BJ (cell line): ENCODE measurements at regions of chr1 and their contacts with region 1.

Region 1: DNA sequence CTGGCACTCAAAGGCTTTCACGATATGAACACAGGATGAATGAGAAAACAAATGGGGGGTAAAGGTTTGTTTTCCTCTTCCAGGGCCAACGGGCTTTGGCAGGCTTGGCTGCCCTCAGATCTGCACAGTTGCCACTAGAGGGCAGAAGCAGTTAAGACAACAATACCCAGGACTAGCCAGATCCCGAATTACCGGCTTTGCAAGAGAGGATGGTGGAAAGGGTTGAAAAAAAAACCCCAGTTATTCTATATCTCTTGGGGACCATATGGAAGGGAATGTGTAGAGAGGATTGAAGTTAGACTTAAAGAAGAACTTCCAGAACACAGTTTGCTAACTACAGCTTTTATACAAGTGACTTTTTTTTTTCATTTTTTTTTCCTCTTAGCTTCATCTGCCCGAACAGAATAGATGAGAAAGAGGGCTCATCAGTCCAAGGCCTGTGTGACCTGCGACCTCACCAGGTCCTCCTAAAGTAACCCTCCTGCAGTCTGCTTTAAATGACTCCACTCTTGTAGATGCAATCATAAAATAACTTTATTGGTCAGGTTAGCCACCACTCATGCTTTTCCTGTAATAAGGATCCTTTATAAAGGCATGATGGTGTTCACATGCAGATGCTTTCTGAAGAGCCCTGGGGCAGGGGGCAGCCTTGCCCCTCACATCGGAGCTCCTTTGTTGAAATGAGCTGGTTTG is 10.7 kb downstream of the FMOD start:
- DNase-seq: no peak
- H3K4me3 ChIP-seq: no peak overlapping the region
- H3K27me3 ChIP-seq: peaks cover 19% of the 10 kb centered on the region
- CTCF ChIP-seq: peak; percentile 91

Region 2: GRCh38 chr1:202998836-202999750 is 341.2 kb before region 1 on chr1:
- CTCF ChIA-PET with region 1: no interaction called
- POLR2A ChIA-PET with region 1: no interaction called
- DNase-seq: no peak
- H3K4me3 ChIP-seq: no peak overlapping the region
- H3K27me3 ChIP-seq: peaks cover 3% of the 10 kb centered on the region
- CTCF ChIP-seq: peak; percentile 79

Region 3: DNA sequence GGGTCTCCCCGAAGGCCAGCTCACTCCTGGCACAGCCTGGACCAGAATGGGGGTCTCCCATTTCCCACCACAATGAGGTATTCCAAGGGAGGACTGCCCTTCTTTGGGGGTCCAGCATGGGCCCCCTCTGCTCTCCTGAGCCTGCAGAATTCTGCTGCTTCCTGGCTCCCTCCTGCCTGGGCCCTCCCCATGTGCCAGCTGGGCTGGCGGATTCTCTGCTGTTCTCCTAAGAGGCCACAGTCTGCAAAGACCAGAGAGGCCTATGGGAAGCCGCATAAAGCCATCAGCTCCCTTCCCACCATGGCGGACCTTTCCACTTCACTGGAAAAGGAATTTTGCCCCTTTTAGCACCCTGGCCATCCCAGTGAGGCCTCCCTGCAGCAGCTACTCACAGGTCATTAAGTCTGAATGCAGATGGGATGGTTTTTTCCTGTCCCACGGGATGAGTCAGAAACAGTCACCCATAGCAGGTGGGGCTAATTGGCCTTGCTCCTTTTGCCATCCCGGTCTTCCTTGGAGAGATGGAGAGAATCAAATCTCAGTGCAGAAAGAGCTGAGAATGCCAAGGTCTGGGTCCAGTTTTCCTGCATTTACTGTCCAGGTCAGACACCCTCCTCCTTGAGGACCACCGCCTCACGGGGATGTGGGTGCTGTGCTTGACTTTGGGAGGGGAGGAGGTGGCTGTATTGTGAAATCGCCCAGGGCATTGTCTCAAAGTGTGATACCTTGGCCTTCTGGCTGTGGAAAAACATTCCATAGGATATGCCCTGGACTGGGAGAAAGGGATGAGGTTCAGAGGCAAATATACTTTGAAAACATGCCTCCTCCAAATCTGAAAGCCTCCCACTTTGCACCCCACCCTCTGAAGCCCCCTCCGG is 187.9 kb before region 1 on chr1:
- CTCF ChIA-PET with region 1: no interaction called
- POLR2A ChIA-PET with region 1: no interaction called
- DNase-seq: no peak
- H3K4me3 ChIP-seq: no peak overlapping the region
- H3K27me3 ChIP-seq: no peaks in the 10 kb centered on the region
- CTCF ChIP-seq: no peak

Region 4: DNA sequence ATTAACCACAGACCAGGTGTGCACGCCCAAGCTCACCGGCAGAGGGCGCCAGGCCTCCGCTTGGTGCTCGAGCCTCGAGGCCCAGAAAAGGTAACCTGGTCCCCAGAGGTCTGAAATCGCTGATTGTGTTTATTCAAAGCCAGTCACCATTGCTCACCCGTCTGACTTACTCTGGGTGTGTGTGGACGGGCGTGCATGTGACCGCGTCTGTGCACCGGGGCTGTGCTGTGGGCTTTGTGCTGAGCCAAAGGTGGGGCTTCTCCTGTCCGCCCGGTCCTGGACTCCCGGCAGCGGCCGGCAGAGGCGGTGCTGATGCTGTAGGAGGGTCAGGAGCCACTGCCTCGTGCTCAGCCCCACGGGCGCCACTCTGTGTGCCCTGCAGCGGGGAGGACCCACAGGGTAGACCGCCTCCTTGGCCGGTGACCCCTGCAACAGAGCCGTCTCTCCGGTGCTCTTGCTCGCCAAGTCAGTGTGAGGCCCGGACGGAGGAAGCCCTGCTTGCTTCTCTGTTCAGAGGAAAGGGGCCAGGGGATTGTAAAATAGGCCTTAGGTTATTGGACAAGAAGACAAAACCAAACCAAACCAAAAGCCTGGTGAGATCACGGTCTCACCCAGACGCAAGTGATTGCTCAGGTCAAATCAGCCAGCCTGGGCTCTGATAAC is 66.9 kb before region 1 on chr1:
- CTCF ChIA-PET with region 1: interaction called, 484 read pairs
- POLR2A ChIA-PET with region 1: no interaction called
- DNase-seq: no peak
- H3K4me3 ChIP-seq: no peak overlapping the region
- H3K27me3 ChIP-seq: no peaks in the 10 kb centered on the region
- CTCF ChIP-seq: peak; percentile 98

Region 5: GRCh38 chr1:203351037-203352013 is 11.1 kb after region 1 on chr1 and contains the start of gene FMOD:
- CTCF ChIA-PET with region 1: interaction called, 132 read pairs
- POLR2A ChIA-PET with region 1: no interaction called
- DNase-seq: no peak
- H3K4me3 ChIP-seq: peak within 1 kb of the TSS; percentile 8; the same call in 1 of the 2 replicates
- H3K27me3 ChIP-seq: peaks cover 7% of the 10 kb centered on the region
- CTCF ChIP-seq: no peak
- polyA plus RNA-seq, gene FMOD: 14.0 and 18.0 TPM in 2 replicates

Region 6: GRCh38 chr1:203381151-203381751 is 41.0 kb after region 1 on chr1:
- CTCF ChIA-PET with region 1: interaction called, 12 read pairs
- POLR2A ChIA-PET with region 1: no interaction called
- DNase-seq: no peak
- H3K4me3 ChIP-seq: no peak overlapping the region
- H3K27me3 ChIP-seq: peaks cover 10% of the 10 kb centered on the region
- CTCF ChIP-seq: no peak

Region 7: DNA sequence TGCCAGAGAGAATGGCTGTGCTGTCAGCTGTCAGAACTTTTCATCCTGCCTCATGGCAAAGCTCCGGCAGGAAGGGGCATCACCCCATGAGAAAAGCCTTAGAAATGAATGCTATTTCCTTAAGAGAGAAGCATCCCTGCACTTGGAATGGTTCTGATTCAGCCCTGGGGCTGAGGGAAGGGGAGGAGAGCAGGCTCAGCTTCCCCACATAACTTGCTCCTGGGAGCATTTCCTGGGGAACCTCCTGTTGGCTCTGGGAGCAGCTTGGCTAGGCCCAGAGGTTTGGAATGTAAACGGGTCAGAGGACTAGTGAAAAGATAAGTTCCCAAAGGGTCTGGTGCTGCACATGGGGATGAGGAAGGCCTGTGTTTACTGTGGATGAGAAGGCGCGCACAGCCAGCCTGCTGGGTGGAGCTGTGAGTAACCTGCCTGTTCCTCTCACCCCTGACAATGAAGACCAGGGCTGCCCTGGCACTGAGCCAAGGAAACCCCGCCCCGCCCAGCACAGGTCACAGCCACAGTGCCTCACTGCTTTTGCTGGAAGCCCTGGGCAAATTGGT is 140.3 kb after region 1 on chr1:
- CTCF ChIA-PET with region 1: interaction called, 203 read pairs
- POLR2A ChIA-PET with region 1: interaction called, 11 read pairs
- DNase-seq: peak; percentile 96
- H3K4me3 ChIP-seq: no peak overlapping the region
- H3K27me3 ChIP-seq: no peaks in the 10 kb centered on the region
- CTCF ChIP-seq: no peak

Region 8: DNA sequence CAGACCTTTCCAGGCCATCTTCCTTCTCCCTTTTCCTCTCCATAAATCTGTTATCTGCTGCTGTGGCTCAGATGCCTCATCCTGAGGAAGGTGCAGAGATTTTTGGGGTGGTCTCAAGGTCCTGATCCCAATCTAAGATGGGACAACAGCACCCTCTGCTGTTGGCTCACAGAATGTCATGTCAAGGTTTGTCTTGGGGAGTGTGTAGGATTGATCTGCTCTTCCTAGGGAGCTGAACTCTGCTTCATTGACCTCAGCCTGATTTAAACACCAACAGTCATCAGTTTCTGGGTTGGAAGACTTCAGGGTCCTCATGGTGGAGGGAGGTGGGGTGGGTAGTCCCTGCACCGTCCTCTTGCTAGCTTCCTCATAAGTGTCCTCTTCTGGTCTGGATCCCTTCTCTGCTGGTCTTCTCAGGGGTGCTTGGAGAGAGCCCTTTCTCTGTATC is 361.9 kb after region 1 on chr1:
- CTCF ChIA-PET with region 1: interaction called, 11 read pairs
- POLR2A ChIA-PET with region 1: no interaction called
- DNase-seq: no peak
- H3K4me3 ChIP-seq: no peak overlapping the region
- H3K27me3 ChIP-seq: no peaks in the 10 kb centered on the region
- CTCF ChIP-seq: peak; percentile 64